Activated CD4-positive, alpha-beta memory T cell treated with anti-CD3 and anti-CD28 coated beads for 36 hours (primary cell): ENCODE measurements at regions of chr19 and their contacts with region 1.

Region 1: GRCh38 chr19:14277608-14278007 is 71.6 kb upstream of the ADGRL1 start:
- DNase-seq: no peak
- H3K4me3 Mint-ChIP-seq: no peak overlapping the region
- H3K27ac Mint-ChIP-seq: no peak overlapping the region
- H3K4me1 Mint-ChIP-seq: peaks cover 15% of the 10 kb centered on the region
- H3K27me3 Mint-ChIP-seq: no peaks in the 10 kb centered on the region

Region 2: GRCh38 chr19:14248578-14249011 is 29.0 kb before region 1 on chr19:
- CTCF ChIA-PET with region 1: no interaction called
- POLR2A ChIA-PET with region 1: no interaction called
- intact Hi-C with region 1: no loop called
- DNase-seq: peak; percentile 57
- H3K4me3 Mint-ChIP-seq: peak overlapping the region; percentile 50
- H3K27ac Mint-ChIP-seq: peak overlapping the region; percentile 66
- H3K4me1 Mint-ChIP-seq: peaks cover 4% of the 10 kb centered on the region
- H3K27me3 Mint-ChIP-seq: no peaks in the 10 kb centered on the region

Region 3: DNA sequence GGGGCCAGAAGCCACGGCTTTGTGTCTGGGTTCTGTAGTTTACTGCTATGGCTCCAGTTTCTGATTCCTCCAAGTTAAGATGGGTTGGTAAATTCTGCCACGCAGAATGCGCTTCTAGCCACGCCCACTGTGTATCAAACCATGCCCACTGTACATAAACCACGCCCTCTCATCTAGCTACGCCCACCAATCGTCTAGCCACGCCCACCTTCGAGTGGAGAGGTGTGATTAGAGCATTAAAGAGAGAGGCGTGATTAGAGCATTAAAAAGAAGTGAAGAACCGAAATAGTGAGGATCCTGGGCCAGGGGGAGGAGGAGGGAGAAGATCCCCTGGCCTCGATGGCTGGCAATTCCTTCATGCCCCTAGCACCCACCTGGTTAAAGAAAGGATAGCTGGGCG is 59.9 kb after region 1 on chr19:
- CTCF ChIA-PET with region 1: interaction called, 3 read pairs
- POLR2A ChIA-PET with region 1: no interaction called
- intact Hi-C with region 1: loop called (anchors 10 kb)
- DNase-seq: peak; percentile 58
- H3K4me3 Mint-ChIP-seq: no peak overlapping the region
- H3K27ac Mint-ChIP-seq: no peak overlapping the region
- H3K4me1 Mint-ChIP-seq: peaks cover 9% of the 10 kb centered on the region
- H3K27me3 Mint-ChIP-seq: no peaks in the 10 kb centered on the region